ENCODE measurements at regions of chr12 and their contacts with region 1.

Region 1: DNA sequence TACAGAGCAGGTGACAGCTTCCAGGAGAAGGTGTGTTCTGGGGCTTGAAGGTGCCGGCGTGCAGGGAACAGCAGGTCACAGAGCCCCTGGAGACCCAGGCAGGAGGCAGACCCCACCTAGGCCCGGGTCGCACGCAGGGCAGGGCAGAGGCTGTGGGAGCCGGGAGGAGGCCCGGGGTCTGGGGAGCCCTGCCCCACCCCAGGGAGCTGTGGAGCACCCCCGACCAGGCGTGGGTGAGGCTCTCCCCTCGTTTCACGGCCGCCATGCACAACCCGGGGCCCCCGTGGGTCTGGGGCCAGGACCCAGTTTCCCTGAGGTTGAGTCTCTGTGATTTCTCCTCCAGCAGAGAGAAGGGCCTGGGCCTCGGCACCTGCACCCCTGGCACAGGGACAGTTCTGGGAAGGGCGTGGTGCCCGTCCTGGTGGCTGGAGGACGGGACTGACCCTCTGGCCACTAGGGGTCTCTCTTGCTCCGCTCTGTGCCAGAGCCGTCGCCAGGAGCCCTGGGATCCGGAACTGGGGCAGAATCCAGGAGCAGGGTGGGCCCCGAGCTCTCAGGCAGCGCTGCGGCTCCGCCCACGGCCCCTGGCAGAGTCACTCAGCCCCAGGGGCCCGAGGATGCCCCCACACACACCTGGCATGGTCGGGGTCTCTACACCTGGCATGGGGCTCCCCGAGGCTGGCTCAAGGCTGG is 75.2 kb upstream of the FBRSL1 start:
- DNase-seq: no peak
- H3K4me3 ChIP-seq: no peak overlapping the region
- CTCF ChIP-seq: peak; percentile 93

Region 2: GRCh38 chr12:132153501-132154340 is 261.1 kb before region 1 on chr12:
- CTCF ChIA-PET with region 1: interaction called, 37 read pairs
- POLR2A ChIA-PET with region 1: no interaction called
- DNase-seq: peak; percentile 3
- H3K4me3 ChIP-seq: peak overlapping the region; percentile 29
- CTCF ChIP-seq: peak; percentile 96

Region 3: DNA sequence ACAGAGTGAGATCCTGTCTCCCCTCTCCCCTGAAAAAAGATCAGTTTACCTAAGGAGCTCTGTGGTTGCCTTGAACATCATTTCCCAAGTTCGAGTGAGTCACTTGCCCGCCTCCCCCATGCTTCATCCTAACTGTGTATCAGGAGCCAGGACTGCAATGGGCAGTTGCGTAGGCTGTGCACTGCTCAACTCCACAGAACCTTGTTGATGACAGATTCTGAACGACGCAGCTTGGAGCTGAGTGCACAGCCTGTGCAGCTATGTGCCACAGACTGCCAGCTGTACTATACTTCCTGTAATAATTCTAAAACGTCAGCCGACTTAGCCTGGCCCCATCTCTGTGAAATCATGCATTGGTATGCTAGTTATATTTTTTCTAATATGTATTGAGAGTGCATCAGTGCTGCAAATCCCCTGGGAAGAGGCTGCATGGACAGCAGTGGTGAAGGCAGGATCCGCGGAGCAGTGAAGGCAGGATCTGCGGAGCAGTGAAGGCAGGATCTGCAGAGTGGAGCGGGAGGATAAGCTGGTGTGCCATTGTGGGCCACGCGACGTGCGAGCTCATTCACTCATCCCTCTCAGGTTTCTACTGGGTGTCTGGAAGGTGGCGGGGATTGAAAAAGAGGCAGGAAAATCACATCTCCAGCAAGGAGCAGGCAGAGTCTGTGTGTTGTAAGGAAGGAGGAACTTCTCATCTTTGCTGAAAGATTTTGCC is 166.2 kb before region 1 on chr12:
- CTCF ChIA-PET with region 1: no interaction called
- POLR2A ChIA-PET with region 1: no interaction called
- DNase-seq: peak; percentile 31
- H3K4me3 ChIP-seq: no peak overlapping the region
- CTCF ChIP-seq: no peak

Region 4: GRCh38 chr12:132523576-132524331 is 109.0 kb after region 1 on chr12:
- CTCF ChIA-PET with region 1: interaction called, 96 read pairs
- POLR2A ChIA-PET with region 1: no interaction called
- DNase-seq: no peak
- H3K4me3 ChIP-seq: no peak overlapping the region
- CTCF ChIP-seq: peak; percentile 84

Region 5: GRCh38 chr12:132600048-132601032 is 185.6 kb after region 1 on chr12:
- CTCF ChIA-PET with region 1: interaction called, 14 read pairs
- POLR2A ChIA-PET with region 1: no interaction called
- DNase-seq: no peak
- H3K4me3 ChIP-seq: peak overlapping the region; percentile 54
- CTCF ChIP-seq: peak; percentile 85

Region 6: DNA sequence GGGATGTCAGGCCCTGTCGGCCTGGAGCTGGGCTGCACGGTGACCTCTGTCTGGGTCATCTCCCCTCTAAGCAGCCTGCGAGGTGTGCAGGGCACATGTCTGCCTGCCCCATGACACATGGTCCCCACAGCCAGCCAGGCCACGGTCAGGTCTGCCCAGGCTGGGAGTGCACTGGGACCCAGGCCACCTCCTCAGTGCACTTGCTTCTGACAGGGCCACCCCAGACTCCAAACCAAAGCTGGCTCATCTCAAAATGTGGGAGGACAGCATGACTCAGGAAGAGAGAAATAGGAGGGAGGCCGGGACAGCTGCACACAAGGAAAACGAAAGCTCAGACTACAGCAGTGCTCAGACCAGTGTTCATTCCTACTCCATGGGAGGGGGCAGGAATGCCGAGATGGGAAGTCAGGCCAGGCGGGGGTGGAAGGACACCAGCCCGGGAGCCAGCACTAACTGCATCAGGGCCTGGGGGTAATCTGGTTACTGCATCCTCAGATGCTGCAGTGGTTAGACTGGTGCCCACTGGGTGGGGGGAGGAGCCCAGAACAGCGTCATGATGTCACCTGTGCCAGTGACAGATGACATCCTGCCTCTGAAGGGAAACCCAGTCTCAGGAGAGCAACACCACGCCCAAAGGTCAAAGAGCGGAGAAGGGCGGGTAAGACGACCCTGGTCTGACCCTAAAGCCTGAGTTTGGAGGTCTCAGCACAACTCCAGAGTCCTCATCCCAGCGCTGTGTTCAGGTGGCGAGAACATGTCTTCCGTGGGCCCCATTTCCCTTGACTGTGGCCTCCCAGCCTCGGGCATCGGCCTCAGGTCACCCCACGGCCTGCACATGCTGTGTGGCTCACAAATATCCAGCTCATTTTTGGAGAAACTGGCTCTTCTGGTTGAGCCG is 207.9 kb after region 1 on chr12:
- CTCF ChIA-PET with region 1: interaction called, 156 read pairs
- POLR2A ChIA-PET with region 1: no interaction called
- DNase-seq: peak; percentile 46
- H3K4me3 ChIP-seq: no peak overlapping the region
- CTCF ChIP-seq: no peak

Measured in AG04449 (cell line).